ENCODE measurements at regions of chr11 and their contacts with region 1.

Region 1: DNA sequence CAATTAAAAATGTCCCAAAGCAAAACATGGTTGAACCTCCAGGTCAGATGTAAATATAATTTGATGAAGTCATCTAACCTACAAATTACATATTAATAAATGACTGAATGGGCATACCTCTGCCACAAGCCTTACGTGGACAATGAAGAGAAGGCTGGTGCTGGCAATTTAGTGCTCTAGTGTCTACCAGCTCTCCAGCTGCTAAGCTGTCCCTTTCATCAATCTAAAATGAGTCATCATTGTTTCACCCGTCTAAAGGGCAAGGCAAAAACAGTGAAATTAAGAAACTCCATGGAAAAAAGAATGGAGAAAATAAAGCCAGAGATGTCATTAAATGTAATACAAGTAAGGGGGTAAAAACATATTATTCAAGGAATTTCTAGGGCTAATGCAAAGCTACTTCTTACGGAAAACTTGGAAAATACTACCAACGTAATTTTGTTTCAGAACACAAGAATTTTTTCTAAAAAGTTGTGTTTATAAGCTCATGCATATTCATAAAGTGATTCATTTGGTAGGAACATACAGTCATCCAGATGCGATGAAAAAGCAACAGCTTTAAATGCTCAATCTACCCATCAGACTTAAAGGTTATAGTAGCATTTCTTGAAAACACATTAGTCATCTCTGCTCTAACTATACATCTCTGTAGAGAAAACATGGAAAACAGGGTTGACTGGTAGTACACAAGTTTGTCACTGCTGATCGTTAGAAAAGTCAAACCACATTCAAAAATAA is 71.5 kb downstream of the SIK3 start:
- DNase-seq: no peak
- ATAC-seq: peak in 1 of 3 donors; percentile 19
- H3K4me3 ChIP-seq: no peak overlapping the region
- H3K4me3 Mint-ChIP-seq: no peak overlapping the region
- H3K27ac ChIP-seq: no peak overlapping the region
- H3K27ac Mint-ChIP-seq: no peak overlapping the region
- H3K4me1 ChIP-seq: peaks cover 21% of the 10 kb centered on the region
- H3K4me1 Mint-ChIP-seq: peaks cover 46 to 52% of the 10 kb centered on the region in 2 donors
- H3K27me3 ChIP-seq: no peaks in the 10 kb centered on the region
- H3K27me3 Mint-ChIP-seq: no peaks in the 10 kb centered on the region
- CTCF ChIP-seq: no peak

Region 2: GRCh38 chr11:116972691-116973090 is 54.1 kb before region 1 on chr11:
- intact Hi-C with region 1: no loop called
- DNase-seq: no peak
- ATAC-seq: no peak
- H3K4me3 ChIP-seq: no peak overlapping the region
- H3K4me3 Mint-ChIP-seq: no peak overlapping the region
- H3K27ac ChIP-seq: no peak overlapping the region
- H3K27ac Mint-ChIP-seq: peak overlapping the region in 1 of 2 donors; percentile 31
- H3K4me1 ChIP-seq: peaks cover 8% of the 10 kb centered on the region
- H3K4me1 Mint-ChIP-seq: peaks cover 23 to 35% of the 10 kb centered on the region in 2 donors
- H3K27me3 ChIP-seq: no peaks in the 10 kb centered on the region
- H3K27me3 Mint-ChIP-seq: no peaks in the 10 kb centered on the region
- CTCF ChIP-seq: no peak

Region 3: DNA sequence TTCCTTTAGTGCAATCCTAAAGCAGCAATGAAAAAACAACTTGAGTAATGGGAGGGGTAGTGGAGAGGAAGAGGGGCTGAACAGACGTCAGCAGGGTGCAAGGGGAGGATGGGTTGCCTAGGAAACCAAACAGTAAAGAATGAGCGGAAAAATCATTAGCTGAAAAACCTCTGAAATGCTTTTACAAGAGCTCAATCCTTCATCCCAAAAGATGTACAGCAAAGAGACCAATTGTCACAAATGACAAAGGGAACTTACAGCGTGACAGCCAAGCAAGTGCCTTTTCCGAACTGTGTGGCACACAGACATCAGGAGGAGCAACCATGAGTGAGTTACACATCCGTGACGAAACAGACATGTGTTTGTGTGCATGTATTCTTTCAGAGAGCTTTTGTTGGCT is 33.2 kb before region 1 on chr11:
- intact Hi-C with region 1: loop called (anchors 5 kb)
- DNase-seq: peak in 1 of 2 donors; percentile 80
- ATAC-seq: peak; percentile 52 to 76 (median 75)
- H3K4me3 ChIP-seq: no peak overlapping the region
- H3K4me3 Mint-ChIP-seq: peak overlapping the region; percentile 43
- H3K27ac ChIP-seq: peak overlapping the region; percentile 46
- H3K27ac Mint-ChIP-seq: peak overlapping the region; percentile 83 to 88
- H3K4me1 ChIP-seq: peaks cover 13% of the 10 kb centered on the region
- H3K4me1 Mint-ChIP-seq: peaks cover 58 to 62% of the 10 kb centered on the region in 2 donors
- H3K27me3 ChIP-seq: no peaks in the 10 kb centered on the region
- H3K27me3 Mint-ChIP-seq: no peaks in the 10 kb centered on the region
- CTCF ChIP-seq: no peak

Region 4: GRCh38 chr11:117052196-117053149 is 25.7 kb after region 1 on chr11:
- intact Hi-C with region 1: no loop called
- DNase-seq: no peak
- ATAC-seq: no peak
- H3K4me3 ChIP-seq: no peak overlapping the region
- H3K4me3 Mint-ChIP-seq: no peak overlapping the region
- H3K27ac ChIP-seq: no peak overlapping the region
- H3K27ac Mint-ChIP-seq: no peak overlapping the region
- H3K4me1 ChIP-seq: no peaks in the 10 kb centered on the region
- H3K4me1 Mint-ChIP-seq: peaks cover 13 to 35% of the 10 kb centered on the region in 2 donors
- H3K27me3 ChIP-seq: no peaks in the 10 kb centered on the region
- H3K27me3 Mint-ChIP-seq: no peaks in the 10 kb centered on the region
- CTCF ChIP-seq: no peak

Region 5: DNA sequence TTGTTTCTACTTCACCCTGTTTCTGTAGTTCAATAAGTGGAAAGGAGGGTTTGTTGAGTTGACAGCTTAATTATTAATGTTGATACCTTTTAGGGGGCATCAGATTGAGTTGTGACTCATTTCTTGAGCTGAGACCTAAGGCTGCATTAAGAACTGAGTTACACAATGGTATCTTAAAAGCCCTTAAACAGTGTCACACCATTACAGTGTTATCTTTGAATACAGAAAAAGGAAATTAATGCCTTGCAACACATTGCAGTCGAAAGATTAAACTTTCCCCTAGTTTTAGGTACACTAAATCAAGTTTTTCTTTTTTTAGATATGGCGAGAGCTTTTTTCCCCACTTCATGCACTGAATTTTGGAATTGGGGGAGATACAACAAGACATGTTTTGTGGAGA is 134.1 kb after region 1 on chr11:
- intact Hi-C with region 1: no loop called
- DNase-seq: no peak
- ATAC-seq: no peak
- H3K4me3 ChIP-seq: no peak overlapping the region
- H3K4me3 Mint-ChIP-seq: no peak overlapping the region
- H3K27ac ChIP-seq: no peak overlapping the region
- H3K27ac Mint-ChIP-seq: no peak overlapping the region
- H3K4me1 ChIP-seq: no peaks in the 10 kb centered on the region
- H3K4me1 Mint-ChIP-seq: peaks cover 8 to 13% of the 10 kb centered on the region in 2 donors
- H3K27me3 ChIP-seq: no peaks in the 10 kb centered on the region
- H3K27me3 Mint-ChIP-seq: no peaks in the 10 kb centered on the region
- CTCF ChIP-seq: no peak